ENCODE measurements at regions of chr2 and their contacts with region 1.

Region 1: DNA sequence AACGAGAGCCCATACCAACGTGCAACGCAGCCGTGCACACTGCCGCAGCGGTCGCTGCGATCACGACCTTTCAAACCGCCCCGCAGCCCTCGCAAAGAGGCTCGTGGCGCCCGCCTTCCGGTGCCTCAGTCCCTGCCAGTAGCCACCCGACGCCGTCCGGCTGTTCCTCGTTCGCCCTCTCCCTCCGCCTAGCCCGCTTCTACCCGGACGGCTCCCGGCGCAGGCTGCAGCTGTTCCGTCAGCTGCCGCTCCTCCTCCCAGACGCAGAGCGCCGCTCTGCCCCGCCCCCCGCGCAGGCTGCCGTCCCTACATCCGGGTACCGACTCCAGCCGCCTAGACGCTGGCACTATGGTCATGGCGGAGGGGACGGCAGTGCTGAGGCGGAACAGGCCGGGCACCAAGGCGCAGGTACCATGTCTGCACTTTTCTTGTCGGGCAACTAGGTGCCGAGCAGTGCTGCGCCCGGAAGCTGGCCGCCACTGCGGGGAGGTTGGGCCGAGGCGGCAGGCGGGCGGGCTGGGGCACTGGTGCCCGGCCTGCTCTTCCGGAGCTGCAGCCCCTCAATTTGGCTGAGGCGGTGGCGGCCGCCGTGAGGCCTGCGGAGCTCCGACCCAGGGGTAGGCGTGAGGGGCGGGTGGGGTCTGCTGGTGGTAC is at the start of gene MOB4:
- DNase-seq: peak; percentile 88 to 97 (median 92)
- ATAC-seq: peak; percentile 89
- H3K4me3 ChIP-seq: peak within 1 kb of the TSS; percentile 77
- H3K4me3 Mint-ChIP-seq: peak within 1 kb of the TSS; percentile 98
- H3K27ac ChIP-seq: peak within 1 kb of the TSS; percentile 86 to 91
- H3K27ac Mint-ChIP-seq: peak within 1 kb of the TSS; percentile 89
- H3K4me1 ChIP-seq: peaks cover 22% of the 10 kb centered on the region
- H3K4me1 Mint-ChIP-seq: peaks cover 46% of the 10 kb centered on the region
- H3K27me3 ChIP-seq: no peaks in the 10 kb centered on the region
- H3K27me3 Mint-ChIP-seq: no peaks in the 10 kb centered on the region
- CTCF ChIP-seq: no peak
- total RNA-seq, gene MOB4: 28.4 to 29.8 TPM

Region 2: GRCh38 chr2:197453161-197453914 is 62.5 kb before region 1 on chr2 and contains the start of gene COQ10B:
- CTCF ChIA-PET with region 1: no interaction called
- POLR2A ChIA-PET with region 1: interaction called, 45 read pairs
- intact Hi-C with region 1: loop called in 1 of 2 experiments (anchors 1 kb)
- DNase-seq: peak; percentile 94 to 100 (median 97)
- ATAC-seq: peak; percentile 85
- H3K4me3 ChIP-seq: peak within 1 kb of the TSS; percentile 67
- H3K4me3 Mint-ChIP-seq: peak within 1 kb of the TSS; percentile 99
- H3K27ac ChIP-seq: peak within 1 kb of the TSS; percentile 98 to 100
- H3K27ac Mint-ChIP-seq: peak within 1 kb of the TSS; percentile 100
- H3K4me1 ChIP-seq: peaks cover 29% of the 10 kb centered on the region
- H3K4me1 Mint-ChIP-seq: peaks cover 52% of the 10 kb centered on the region
- H3K27me3 ChIP-seq: no peaks in the 10 kb centered on the region
- H3K27me3 Mint-ChIP-seq: no peaks in the 10 kb centered on the region
- CTCF ChIP-seq: peak; percentile 47
- total RNA-seq, gene COQ10B: 53.4 to 55.3 TPM

Region 3: DNA sequence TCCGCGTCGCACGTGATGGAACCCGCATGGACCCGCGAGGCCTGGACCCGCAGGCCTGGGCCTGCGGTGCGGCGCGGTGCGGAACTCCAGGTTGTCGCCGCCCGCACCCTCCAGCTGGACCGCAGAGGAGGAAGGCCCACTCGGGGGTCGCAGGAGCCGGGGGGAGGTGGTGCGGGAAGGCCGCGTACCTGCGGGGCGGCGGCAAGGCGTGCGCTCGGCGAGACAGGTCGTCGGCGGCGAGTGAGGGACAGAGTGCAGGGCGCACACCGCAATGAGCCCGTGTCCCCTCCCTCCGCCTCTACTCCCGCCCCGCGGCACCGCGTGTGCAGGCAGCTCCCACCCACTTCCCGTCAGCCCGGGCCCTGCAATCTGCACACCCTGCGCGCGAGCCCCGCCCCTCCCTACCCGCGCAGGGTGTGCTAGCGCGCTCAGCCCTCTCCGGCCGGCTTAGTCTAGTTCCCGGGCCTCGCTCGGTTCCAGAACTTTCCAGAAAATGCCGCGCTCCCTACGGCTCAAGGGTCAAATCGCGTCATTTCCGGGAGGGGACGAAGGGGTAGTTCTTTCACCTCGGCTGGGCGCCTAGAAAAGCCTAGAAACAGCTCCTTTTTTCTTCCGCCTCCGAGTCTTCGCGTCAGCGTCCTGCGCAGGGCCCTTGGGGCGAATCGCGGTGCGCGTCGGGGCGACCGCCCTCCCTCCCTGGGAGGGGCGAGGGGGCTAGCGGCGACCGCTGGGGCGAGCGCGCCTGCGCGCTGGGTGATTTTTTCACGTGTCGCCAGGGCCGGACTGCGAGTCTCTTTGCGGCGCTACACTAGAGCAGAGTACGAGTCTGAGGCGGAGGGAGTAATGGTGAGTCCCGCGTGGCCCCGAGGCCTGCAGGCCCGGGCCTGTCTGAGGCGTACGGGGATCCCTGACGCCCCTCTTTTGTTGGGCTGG is 16.0 kb before region 1 on chr2 and contains the starts of genes HSPD1 and HSPE1:
- CTCF ChIA-PET with region 1: interaction called, 7 read pairs
- POLR2A ChIA-PET with region 1: interaction called, 219 read pairs
- intact Hi-C with region 1: loop called (anchors 1 kb)
- DNase-seq: peak; percentile 91 to 99 (median 95)
- ATAC-seq: peak; percentile 85
- H3K4me3 ChIP-seq: peak within 1 kb of the TSS; percentile 95
- H3K4me3 Mint-ChIP-seq: peak within 1 kb of the TSS; percentile 94
- H3K27ac ChIP-seq: peak within 1 kb of the TSS; percentile 93 to 97
- H3K27ac Mint-ChIP-seq: peak within 1 kb of the TSS; percentile 87
- H3K4me1 ChIP-seq: peaks cover 41% of the 10 kb centered on the region
- H3K4me1 Mint-ChIP-seq: peaks cover 69% of the 10 kb centered on the region
- H3K27me3 ChIP-seq: no peaks in the 10 kb centered on the region
- H3K27me3 Mint-ChIP-seq: no peaks in the 10 kb centered on the region
- CTCF ChIP-seq: no peak
- total RNA-seq, gene HSPD1: 154 to 157 TPM
- total RNA-seq, gene HSPE1: 50.8 to 56.2 TPM

Region 4: GRCh38 chr2:197538412-197538811 is 22.5 kb after region 1 on chr2:
- CTCF ChIA-PET with region 1: no interaction called
- POLR2A ChIA-PET with region 1: interaction called, 11 read pairs
- intact Hi-C with region 1: no loop called
- DNase-seq: no peak
- ATAC-seq: no peak
- H3K4me3 ChIP-seq: no peak overlapping the region
- H3K4me3 Mint-ChIP-seq: no peak overlapping the region
- H3K27ac ChIP-seq: no peak overlapping the region
- H3K27ac Mint-ChIP-seq: peak overlapping the region; percentile 60
- H3K4me1 ChIP-seq: peaks cover 8% of the 10 kb centered on the region
- H3K4me1 Mint-ChIP-seq: peaks cover 46% of the 10 kb centered on the region
- H3K27me3 ChIP-seq: no peaks in the 10 kb centered on the region
- H3K27me3 Mint-ChIP-seq: no peaks in the 10 kb centered on the region
- CTCF ChIP-seq: no peak

Region 5: GRCh38 chr2:197599285-197599965 is 83.6 kb after region 1 on chr2:
- CTCF ChIA-PET with region 1: no interaction called
- POLR2A ChIA-PET with region 1: no interaction called
- intact Hi-C with region 1: no loop called
- DNase-seq: peak in 10 of 14 experiments; percentile 2 to 65 (median 27)
- ATAC-seq: peak; percentile 97
- H3K4me3 ChIP-seq: no peak overlapping the region
- H3K4me3 Mint-ChIP-seq: peak overlapping the region; percentile 18
- H3K27ac ChIP-seq: no peak overlapping the region
- H3K27ac Mint-ChIP-seq: no peak overlapping the region
- H3K4me1 ChIP-seq: peaks cover 6% of the 10 kb centered on the region
- H3K4me1 Mint-ChIP-seq: no peaks in the 10 kb centered on the region
- H3K27me3 ChIP-seq: no peaks in the 10 kb centered on the region
- H3K27me3 Mint-ChIP-seq: peaks cover 28% of the 10 kb centered on the region
- CTCF ChIP-seq: peak; percentile 35

Measured in CD4-positive, alpha-beta T cell (primary cell).